Motor neuron (in vitro differentiated cells): ENCODE measurements at regions of chr10 and their contacts with region 1.

Region 1: DNA sequence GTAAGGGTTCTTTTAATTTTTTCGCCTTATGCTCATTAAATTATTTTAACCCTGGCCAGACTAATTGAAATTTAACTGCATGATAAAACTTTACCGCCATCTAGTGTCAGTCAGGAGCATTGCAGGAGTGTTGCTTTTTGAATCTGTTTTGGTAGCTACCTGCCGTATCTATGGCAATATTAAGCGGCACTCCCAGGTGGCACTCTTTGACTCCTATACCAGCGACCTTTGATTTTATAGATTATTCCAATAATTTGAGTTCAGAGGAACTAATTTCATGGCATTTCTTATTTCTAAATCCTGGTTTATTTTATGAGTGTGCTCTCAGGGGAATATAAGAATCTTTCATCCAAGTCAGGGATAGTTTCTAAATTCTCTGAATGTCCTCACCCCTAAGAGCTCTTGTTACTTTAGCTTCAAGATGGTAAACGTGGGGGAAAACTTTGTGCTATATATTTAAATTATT is 198.9 kb downstream of the REEP3 start:
- ATAC-seq: peak in 1 of 8 experiments; percentile 40
- H3K4me3 ChIP-seq: no peak overlapping the region
- H3K27ac ChIP-seq: no peak overlapping the region
- H3K4me1 ChIP-seq: peaks cover 7 to 21% of the 10 kb centered on the region in 2 donors

Region 2: GRCh38 chr10:63157845-63158624 is 562.1 kb before region 1 on chr10:
- in situ Hi-C with region 1: loop called in 1 of 9 experiments (anchors 25 kb)
- ATAC-seq: peak; percentile 35 to 79 (median 68)
- H3K4me3 ChIP-seq: no peak overlapping the region
- H3K27ac ChIP-seq: no peak overlapping the region
- H3K4me1 ChIP-seq: no peaks in the 10 kb centered on the region

Region 3: GRCh38 chr10:63217120-63217605 is 502.9 kb before region 1 on chr10:
- in situ Hi-C with region 1: loop called in 4 of 9 experiments (anchors 25 kb)
- ATAC-seq: peak; percentile 58 to 84 (median 74)
- H3K4me3 ChIP-seq: no peak overlapping the region
- H3K27ac ChIP-seq: no peak overlapping the region
- H3K4me1 ChIP-seq: no peaks in the 10 kb centered on the region

Region 4: GRCh38 chr10:63491588-63492316 is 228.4 kb before region 1 on chr10:
- in situ Hi-C with region 1: loop called in 1 of 9 experiments (anchors 25 kb)
- ATAC-seq: peak in 3 of 8 experiments; percentile 61 to 71 (median 67)
- H3K4me3 ChIP-seq: no peak overlapping the region
- H3K27ac ChIP-seq: no peak overlapping the region
- H3K4me1 ChIP-seq: peaks cover 2 to 6% of the 10 kb centered on the region in 2 donors

Region 5: GRCh38 chr10:64209561-64209960 is 489.5 kb after region 1 on chr10:
- in situ Hi-C with region 1: no loop called
- ATAC-seq: peak in 1 of 8 experiments; percentile 26
- H3K4me3 ChIP-seq: no peak overlapping the region
- H3K27ac ChIP-seq: no peak overlapping the region
- H3K4me1 ChIP-seq: no peaks in the 10 kb centered on the region

Region 6: GRCh38 chr10:64312876-64313275 is 592.8 kb after region 1 on chr10:
- in situ Hi-C with region 1: no loop called
- ATAC-seq: peak in 1 of 8 experiments; percentile 46
- H3K4me3 ChIP-seq: no peak overlapping the region
- H3K27ac ChIP-seq: no peak overlapping the region
- H3K4me1 ChIP-seq: peaks cover 7 to 15% of the 10 kb centered on the region in 2 donors